ENCODE measurements at regions of chr11 and their contacts with region 1.

Region 1: GRCh38 chr11:66081505-66081904 is 11.4 kb downstream of the PACS1 start:
- DNase-seq: peak; percentile 70
- H3K4me3 Mint-ChIP-seq: peak overlapping the region; percentile 89
- H3K27ac Mint-ChIP-seq: peak overlapping the region; percentile 93
- H3K4me1 Mint-ChIP-seq: peaks cover 64% of the 10 kb centered on the region
- H3K27me3 Mint-ChIP-seq: no peaks in the 10 kb centered on the region

Region 2: DNA sequence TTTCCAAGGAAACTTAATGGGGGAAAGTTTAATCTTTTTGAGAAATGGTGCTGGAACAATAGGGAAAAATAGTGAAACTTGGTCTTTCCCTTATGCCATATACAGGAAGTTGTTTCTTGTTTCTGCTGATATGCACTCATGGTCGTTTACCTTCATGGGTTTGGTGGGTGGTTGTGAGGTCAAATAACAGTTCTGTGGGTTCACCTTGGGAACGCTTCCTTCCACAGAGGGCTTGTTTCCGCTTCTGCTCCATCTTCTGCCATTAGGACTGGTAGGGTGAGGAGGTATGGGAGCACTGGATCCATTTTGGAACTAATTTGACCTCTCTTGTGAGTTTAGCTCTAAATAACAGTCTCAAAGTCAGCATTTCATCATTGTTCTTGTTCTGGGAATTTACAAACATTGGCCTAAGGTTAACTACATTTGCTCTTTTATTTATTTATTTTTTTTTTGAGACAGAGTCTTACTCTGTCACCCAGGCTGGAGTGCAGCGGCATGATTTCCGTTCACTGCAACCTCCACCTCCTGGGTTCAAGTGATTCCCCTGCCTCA is 401.2 kb before region 1 on chr11:
- intact Hi-C with region 1: no loop called
- DNase-seq: no peak
- H3K4me3 Mint-ChIP-seq: no peak overlapping the region
- H3K27ac Mint-ChIP-seq: no peak overlapping the region
- H3K4me1 Mint-ChIP-seq: no peaks in the 10 kb centered on the region
- H3K27me3 Mint-ChIP-seq: peaks cover 13% of the 10 kb centered on the region

Region 3: DNA sequence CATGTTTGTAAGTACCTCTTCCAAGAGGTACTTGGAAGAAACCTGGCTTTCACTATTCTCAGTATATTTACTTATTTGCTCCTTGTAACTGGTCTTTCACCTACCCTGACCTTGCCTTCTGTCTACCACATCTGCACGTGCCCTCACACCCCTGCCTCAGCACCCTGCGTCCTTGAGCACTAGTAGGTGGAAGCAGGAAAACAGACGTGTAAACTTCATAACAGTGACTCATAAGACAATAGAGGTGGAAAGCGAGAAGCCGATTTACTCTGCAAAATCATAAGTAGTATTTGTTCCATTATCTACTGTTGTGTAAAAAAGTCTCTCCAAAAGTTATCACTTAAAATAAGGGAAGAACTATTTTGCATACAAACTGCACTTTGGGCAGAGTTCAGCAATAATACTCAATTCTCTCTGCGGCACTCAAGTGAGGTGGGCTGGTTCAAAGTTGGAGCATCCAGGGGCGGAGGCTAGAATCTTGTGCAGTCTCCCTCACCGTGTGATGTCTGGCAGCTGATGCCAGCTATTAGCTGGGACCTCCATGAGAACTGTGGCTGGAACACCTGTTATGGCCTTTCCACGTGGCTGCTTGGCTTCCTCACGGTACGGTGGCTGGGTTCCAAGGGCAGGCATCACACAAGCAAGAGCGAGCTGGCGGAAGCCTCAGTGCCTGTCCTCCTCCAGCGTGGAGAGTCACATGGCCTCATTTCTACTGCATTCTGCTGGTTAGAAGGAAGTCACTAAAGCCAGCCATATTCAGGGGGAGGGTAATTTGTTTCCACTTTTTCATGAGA is 19.0 kb after region 1 on chr11:
- intact Hi-C with region 1: loop called (anchors 2 kb)
- DNase-seq: peak; percentile 63
- H3K4me3 Mint-ChIP-seq: peak overlapping the region; percentile 83
- H3K27ac Mint-ChIP-seq: peak overlapping the region; percentile 86
- H3K4me1 Mint-ChIP-seq: peaks cover 53% of the 10 kb centered on the region
- H3K27me3 Mint-ChIP-seq: no peaks in the 10 kb centered on the region

Region 4: DNA sequence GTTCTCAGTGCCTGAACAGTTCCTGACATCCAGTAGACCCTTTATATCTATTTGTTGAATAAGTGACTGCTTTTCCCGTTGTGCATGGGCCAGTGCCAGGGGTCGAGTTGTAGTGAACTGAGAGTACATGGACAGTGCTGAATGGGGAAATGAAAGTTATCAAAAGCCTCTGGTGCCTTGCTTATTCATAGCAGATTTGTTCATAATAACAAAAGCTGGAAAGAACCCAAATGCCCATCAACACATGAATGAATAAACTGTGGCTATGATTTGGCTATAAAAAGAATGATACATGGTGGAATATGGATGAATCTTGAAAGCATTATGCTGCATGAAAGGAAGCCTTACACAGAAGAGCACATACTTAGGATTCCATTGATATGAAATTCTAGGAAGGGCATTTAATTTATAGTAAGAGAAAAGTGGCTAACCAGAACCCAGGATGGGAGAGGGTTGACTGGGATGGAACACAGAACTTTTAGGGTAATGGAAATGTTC is 31.1 kb after region 1 on chr11:
- intact Hi-C with region 1: loop called (anchors 1 kb)
- DNase-seq: no peak
- H3K4me3 Mint-ChIP-seq: no peak overlapping the region
- H3K27ac Mint-ChIP-seq: peak overlapping the region; percentile 37
- H3K4me1 Mint-ChIP-seq: peaks cover 76% of the 10 kb centered on the region
- H3K27me3 Mint-ChIP-seq: no peaks in the 10 kb centered on the region

Region 5: DNA sequence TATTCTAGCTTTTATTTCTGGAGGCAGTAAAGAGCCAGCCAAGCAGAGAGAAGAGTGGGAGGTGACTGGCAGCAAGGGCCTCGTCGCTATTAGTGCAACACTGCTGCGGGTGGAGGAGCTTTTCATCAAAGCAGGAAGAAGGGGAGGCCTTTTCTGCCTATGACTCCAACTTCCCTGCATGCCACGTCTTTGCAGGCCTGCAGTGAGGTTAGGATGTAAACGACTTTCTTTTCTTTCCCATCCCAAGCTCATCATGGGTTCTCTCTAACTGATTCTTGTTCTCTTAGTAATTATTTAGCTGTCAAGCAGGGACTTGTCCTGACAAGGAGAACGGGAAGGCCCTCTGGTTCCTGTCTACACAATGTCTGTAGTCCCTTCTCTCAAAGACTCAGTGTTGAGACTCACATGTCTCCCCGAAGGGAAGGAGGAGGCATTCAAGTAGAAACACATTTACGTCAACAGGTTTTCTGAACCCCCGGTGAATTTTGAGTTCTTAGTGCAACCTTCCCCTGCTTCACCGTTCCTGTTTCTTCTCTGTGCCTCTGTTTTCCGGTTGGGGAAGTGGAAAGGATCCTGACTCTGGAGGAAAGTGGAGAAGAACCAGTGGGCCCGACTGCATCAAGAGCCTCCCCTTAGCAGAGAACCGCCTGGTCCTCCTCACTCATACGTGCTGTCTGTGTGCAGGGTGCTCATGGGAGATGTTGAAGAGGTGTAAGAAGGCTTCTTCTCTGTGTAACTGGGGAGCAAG is 45.5 kb after region 1 on chr11:
- intact Hi-C with region 1: loop called (anchors 1 kb)
- DNase-seq: peak; percentile 38
- H3K4me3 Mint-ChIP-seq: peak overlapping the region; percentile 67
- H3K27ac Mint-ChIP-seq: peak overlapping the region; percentile 97
- H3K4me1 Mint-ChIP-seq: peaks cover 59% of the 10 kb centered on the region
- H3K27me3 Mint-ChIP-seq: no peaks in the 10 kb centered on the region

Region 6: GRCh38 chr11:66136752-66137123 is 55.2 kb after region 1 on chr11:
- intact Hi-C with region 1: loop called (anchors 1 kb)
- DNase-seq: no peak
- H3K4me3 Mint-ChIP-seq: no peak overlapping the region
- H3K27ac Mint-ChIP-seq: peak overlapping the region; percentile 52
- H3K4me1 Mint-ChIP-seq: peaks cover 28% of the 10 kb centered on the region
- H3K27me3 Mint-ChIP-seq: no peaks in the 10 kb centered on the region

Region 7: DNA sequence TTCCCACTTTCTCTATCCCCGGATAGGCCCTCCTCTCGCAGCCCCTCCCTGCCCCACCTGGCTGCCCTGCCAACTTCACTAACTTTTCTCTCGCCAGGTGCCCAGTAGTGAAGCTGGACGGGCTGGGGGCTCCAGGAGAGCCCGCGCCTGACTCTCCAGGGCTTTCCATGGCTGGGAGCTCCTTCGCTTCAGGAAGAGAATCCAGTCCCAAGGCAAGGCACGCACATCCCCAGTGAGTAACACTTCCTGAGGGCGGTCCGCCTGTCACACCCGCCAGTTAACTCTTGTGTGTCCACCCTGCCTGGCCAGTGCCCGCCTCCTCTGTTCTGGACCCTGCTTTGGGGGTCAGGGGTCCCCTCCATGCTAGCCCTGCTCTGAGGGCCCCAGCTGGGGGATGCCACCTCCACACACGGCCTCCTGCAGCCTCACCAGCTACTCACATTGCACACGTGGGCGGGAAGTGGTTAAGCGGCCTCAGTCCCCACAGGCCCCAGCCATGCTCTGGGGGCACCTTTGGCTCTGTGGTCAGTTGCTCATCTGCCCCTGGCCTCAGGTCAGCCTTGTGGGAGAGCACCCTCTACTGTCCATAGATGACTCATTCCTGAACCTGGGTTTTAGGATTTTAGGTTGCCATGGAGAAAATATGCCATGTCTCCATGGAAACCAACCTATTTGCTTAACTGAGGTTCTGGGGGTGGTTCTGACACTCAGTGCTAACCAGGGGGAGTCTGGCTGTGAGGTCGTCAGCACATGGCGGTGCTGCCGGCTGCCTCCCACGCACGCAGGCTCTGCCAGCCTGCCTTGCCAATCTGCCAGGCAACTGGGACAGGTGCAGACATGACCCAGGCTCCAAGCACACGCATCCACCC is 255.0 kb after region 1 on chr11 and contains the start of gene RIN1:
- intact Hi-C with region 1: no loop called
- DNase-seq: peak; percentile 39
- H3K4me3 Mint-ChIP-seq: peak within 1 kb of the TSS; percentile 59
- H3K27ac Mint-ChIP-seq: peak within 1 kb of the TSS; percentile 61
- H3K4me1 Mint-ChIP-seq: peaks cover 21% of the 10 kb centered on the region
- H3K27me3 Mint-ChIP-seq: peaks cover 3% of the 10 kb centered on the region
- total RNA-seq, gene RIN1: 0.78 and 0.86 TPM in 2 replicates